Spleen (tissue), 13 donors: ENCODE measurements at regions of chr3 and their contacts with region 1.

Region 1: GRCh38 chr3:179562591-179563270 is at the start of gene ACTL6A:
- DNase-seq: peak; percentile 99
- H3K4me3 ChIP-seq: peak within 1 kb of the TSS; percentile 89 to 99 (median 94)
- H3K27ac ChIP-seq: peak within 1 kb of the TSS; percentile 78 to 93 (median 89)
- H3K4me1 ChIP-seq: peaks cover 7 to 59% (median 28%) of the 10 kb centered on the region in 6 donors
- H3K27me3 ChIP-seq: no peaks in the 10 kb centered on the region
- CTCF ChIP-seq: peak in 1 of 11 experiments; percentile 32
- POLR2A ChIP-seq: peak in 1 of 3 donors; percentile 29
- total RNA-seq, gene ACTL6A: 33.9 to 69.5 (median 45.5) TPM

Region 2: DNA sequence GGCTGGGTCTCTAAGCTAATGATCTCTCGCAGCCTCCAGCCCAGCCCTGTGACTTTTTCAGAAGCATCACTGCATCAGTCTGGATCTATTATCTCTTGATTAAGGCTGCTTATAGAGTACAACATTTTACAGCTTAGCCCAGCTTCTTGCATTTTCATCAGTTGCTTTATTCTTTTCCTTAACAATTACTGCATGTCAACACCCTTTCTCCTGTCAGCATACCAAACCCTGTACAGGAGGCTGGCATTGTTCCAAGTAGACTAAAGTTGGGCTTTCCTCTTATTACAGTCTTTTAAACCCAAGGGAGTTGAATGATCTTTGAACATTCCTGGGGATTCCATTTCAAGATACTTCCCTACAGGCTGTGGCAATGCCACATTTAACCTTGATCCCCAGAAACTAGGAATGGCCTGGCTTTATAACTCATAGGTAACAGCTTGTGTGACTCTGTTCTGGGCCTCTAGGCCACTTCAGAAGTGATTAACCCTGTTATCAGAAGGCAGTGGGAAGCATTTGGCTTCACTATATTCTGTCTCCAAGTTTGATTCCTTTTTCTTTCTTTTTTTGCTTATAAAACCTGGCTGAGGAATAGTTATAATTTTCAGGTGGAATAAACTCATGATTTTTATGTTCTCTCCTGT is 843.6 kb before region 1 on chr3:
- intact Hi-C with region 1: no loop called
- DNase-seq: no peak
- H3K4me3 ChIP-seq: no peak overlapping the region
- H3K27ac ChIP-seq: no peak overlapping the region
- H3K4me1 ChIP-seq: no peaks in the 10 kb centered on the region
- H3K27me3 ChIP-seq: no peaks in the 10 kb centered on the region
- CTCF ChIP-seq: no peak
- POLR2A ChIP-seq: no peak

Region 3: GRCh38 chr3:178849199-178849910 is 713.4 kb before region 1 on chr3:
- intact Hi-C with region 1: no loop called
- DNase-seq: no peak
- H3K4me3 ChIP-seq: no peak overlapping the region
- H3K27ac ChIP-seq: no peak overlapping the region
- H3K4me1 ChIP-seq: peaks cover 0 to 7% (median 0%) of the 10 kb centered on the region in 6 donors
- H3K27me3 ChIP-seq: no peaks in the 10 kb centered on the region
- CTCF ChIP-seq: no peak
- POLR2A ChIP-seq: no peak

Region 4: DNA sequence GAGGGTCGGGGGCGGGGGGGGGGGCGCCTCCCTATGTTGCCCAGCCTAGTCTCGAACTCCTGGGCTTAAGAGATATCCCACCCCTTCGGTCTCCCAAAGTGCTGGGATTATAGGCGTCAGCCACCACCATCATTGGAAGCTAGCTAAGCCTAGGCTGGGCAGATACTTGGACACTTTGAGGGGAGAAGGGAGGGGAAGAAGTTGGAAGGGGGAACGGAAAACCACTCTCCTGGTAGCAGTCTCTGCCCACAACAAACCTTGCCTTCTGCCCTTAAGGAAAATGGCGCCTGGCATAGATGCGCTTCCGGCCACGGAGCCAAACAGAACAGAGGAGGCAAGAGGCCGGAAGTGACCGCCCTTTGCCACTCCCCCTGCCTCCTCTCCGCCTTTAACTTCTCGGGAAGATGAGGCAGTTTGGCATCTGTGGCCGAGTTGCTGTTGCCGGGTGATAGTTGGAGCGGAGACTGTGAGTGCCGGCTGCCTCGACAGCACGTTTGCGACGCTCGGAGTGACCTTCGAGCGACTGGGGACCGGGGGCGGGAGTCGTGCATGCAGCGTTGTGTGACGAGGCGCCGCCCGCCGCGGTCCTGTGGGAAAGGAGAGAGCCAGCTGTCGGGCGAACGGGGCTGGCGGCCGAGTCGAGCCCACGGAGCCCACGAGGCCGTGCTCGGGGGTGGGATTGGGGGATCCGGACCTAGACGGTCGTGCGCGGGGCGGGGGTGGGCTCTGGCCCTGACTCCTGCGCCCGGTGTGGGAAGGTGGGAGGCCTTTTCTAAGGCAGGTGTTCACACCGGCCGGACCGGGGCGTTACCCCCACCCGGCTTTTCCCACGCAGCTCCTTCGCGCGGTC is 215.2 kb before region 1 on chr3 and contains the start of gene MFN1:
- intact Hi-C with region 1: loop called (anchors 10 kb)
- DNase-seq: peak; percentile 97
- H3K4me3 ChIP-seq: peak within 1 kb of the TSS; percentile 69 to 98 (median 93)
- H3K27ac ChIP-seq: peak within 1 kb of the TSS; percentile 73 to 95 (median 88)
- H3K4me1 ChIP-seq: peaks cover 17 to 56% (median 34%) of the 10 kb centered on the region in 6 donors
- H3K27me3 ChIP-seq: no peaks in the 10 kb centered on the region
- CTCF ChIP-seq: peak in 1 of 11 experiments; percentile 18
- POLR2A ChIP-seq: peak in 2 of 3 donors; percentile 10 to 33
- total RNA-seq, gene MFN1: 43.7 to 74.4 (median 64.1) TPM

Region 5: DNA sequence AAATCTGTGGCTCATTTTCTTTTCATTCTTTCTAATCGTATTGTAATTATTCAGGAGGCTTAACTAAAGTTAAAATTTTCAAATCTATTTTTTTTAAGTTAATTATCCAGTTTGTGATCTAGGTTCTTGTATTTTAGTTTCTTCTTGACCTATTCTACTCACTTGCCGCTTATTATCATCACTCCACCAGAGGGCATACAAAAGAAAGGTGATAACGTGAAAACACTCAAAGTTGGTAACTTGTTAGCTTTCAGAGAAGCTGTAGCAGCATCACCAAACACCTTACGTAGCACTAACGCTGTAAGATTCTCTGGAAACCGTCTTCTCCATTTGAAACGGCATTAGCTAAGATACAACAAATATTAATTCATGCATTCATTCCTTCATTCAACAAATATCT is 116.2 kb before region 1 on chr3:
- intact Hi-C with region 1: loop called (anchors 10 kb)
- DNase-seq: no peak
- H3K4me3 ChIP-seq: no peak overlapping the region
- H3K27ac ChIP-seq: no peak overlapping the region
- H3K4me1 ChIP-seq: peaks cover 0 to 80% (median 28%) of the 10 kb centered on the region in 6 donors
- H3K27me3 ChIP-seq: peaks cover 0 to 16% (median 0%) of the 10 kb centered on the region in 7 donors
- CTCF ChIP-seq: peak in 8 of 11 experiments; percentile 3 to 44 (median 33)
- POLR2A ChIP-seq: no peak

Region 6: DNA sequence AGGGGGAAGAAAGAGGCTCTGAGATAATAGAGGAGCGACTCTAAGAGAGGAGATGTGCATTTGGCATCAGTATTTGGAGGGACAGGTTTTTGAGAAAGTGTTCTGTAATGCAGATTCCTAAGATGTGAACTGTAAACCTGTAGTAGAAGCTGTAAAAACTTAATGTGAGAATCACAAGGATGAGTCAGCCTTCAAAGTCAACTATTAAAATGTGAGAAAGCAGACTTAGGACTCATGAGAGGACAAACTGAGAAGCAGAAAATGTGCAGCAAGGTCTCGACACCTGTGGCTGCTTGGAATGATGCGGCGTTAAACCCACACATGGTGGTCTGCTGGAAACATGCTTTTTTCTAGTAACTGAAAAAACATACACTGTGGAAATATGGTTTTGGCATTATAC is 126.1 kb after region 1 on chr3:
- intact Hi-C with region 1: no loop called
- DNase-seq: no peak
- H3K4me3 ChIP-seq: no peak overlapping the region
- H3K27ac ChIP-seq: no peak overlapping the region
- H3K4me1 ChIP-seq: peaks cover 0 to 4% (median 0%) of the 10 kb centered on the region in 6 donors
- H3K27me3 ChIP-seq: no peaks in the 10 kb centered on the region
- CTCF ChIP-seq: no peak
- POLR2A ChIP-seq: no peak

Region 7: GRCh38 chr3:180358179-180358578 is 795.4 kb after region 1 on chr3:
- intact Hi-C with region 1: no loop called
- DNase-seq: no peak
- H3K4me3 ChIP-seq: no peak overlapping the region
- H3K27ac ChIP-seq: no peak overlapping the region
- H3K4me1 ChIP-seq: no peaks in the 10 kb centered on the region
- H3K27me3 ChIP-seq: no peaks in the 10 kb centered on the region
- CTCF ChIP-seq: no peak
- POLR2A ChIP-seq: no peak